AG04449 (cell line): ENCODE measurements at regions of chr1 and their contacts with region 1.

Region 1: GRCh38 chr1:28088168-28088961 is at the start of gene EYA3:
- DNase-seq: peak; percentile 73
- H3K4me3 ChIP-seq: peak within 1 kb of the TSS; percentile 96
- CTCF ChIP-seq: no peak

Region 2: GRCh38 chr1:27884006-27884954 is 204.1 kb before region 1 on chr1:
- CTCF ChIA-PET with region 1: no interaction called
- POLR2A ChIA-PET with region 1: no interaction called
- DNase-seq: no peak
- H3K4me3 ChIP-seq: no peak overlapping the region
- CTCF ChIP-seq: no peak

Region 3: DNA sequence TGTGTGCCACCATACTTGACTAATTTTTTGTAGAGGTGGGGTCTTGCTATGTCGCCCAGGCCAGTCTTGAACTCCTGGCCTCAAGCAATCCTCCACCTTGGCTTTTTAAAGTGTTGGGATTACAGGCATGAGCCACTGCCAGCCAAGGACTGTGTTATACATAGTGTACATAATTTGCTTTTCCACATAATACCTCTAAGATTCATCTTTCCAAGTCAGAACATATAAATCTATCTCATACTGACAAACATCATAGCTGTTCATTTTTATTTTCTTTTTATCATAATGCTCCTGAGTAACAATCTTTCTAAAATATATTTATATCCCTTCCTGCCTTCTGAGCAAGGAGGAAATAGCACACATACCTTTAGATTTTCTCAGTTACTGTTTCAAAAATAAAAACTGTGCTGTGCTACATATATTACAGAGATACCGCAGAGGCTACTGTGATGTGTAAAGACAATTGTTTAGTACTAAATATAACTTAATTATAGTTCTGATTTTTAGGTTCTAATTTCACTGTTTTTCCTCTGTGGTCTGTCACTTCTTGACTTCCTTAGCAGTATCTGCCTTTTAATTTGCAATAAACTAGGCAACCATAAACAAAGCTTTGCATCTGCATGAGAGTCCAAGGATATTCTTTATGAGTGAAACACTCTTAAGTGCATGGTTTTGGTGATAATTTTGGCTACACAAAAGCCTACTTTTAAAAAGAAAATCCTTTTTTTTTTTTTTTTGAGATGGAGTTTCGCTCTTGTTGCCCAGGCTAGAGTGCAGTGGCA is 59.3 kb before region 1 on chr1:
- CTCF ChIA-PET with region 1: interaction called, 11 read pairs
- POLR2A ChIA-PET with region 1: interaction called, 3 read pairs
- DNase-seq: no peak
- H3K4me3 ChIP-seq: no peak overlapping the region
- CTCF ChIP-seq: no peak

Region 4: GRCh38 chr1:28104866-28105467 is 16.6 kb after region 1 on chr1:
- CTCF ChIA-PET with region 1: interaction called, 79 read pairs
- POLR2A ChIA-PET with region 1: no interaction called
- DNase-seq: no peak
- H3K4me3 ChIP-seq: peak overlapping the region; percentile 18
- CTCF ChIP-seq: no peak

Region 5: DNA sequence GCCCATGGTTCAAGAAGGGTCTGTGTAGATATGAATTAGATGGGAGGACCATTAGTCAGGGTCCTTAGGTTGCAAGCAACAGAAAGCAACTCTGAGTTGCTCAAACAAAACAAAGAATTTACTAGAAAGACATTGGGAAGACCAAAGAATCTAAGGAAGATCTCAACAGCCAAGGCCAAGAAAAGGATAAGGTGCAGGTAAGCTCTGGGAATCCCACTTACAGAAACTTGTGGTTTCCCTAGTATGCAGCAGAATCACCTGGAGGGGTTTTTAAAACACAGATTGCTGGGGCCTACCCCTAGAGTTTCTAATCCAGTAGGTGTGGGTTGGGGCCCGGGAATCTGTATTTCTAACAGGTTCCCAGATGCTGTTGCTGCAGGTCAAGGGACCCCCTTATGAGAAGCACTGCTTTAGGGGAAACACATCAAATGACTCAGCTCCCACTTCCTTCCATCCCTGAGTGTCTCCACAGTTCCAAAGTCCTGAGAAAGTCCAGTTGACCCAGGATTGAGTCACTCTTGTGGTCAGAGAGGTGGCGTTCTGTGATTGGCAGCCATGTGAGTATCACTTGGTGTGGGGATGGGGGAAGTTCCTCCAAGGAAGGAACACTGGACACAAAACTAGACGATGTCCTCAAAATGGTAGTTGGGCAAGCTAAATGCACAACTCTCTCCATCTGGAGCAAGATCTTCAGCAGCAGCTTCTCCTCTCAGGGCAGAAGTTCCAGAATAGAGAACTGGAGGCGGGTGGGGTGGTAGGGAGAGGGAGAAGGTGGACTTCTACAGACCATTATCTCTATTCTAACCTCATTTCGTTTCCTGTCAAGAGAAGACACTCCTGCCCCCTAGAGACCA is 24.2 kb after region 1 on chr1:
- CTCF ChIA-PET with region 1: interaction called, 39 read pairs
- POLR2A ChIA-PET with region 1: no interaction called
- DNase-seq: no peak
- H3K4me3 ChIP-seq: no peak overlapping the region
- CTCF ChIP-seq: no peak

Region 6: GRCh38 chr1:28194326-28195035 is 106.1 kb after region 1 on chr1:
- CTCF ChIA-PET with region 1: interaction called, 16 read pairs
- POLR2A ChIA-PET with region 1: no interaction called
- DNase-seq: no peak
- H3K4me3 ChIP-seq: no peak overlapping the region
- CTCF ChIP-seq: no peak

Region 7: DNA sequence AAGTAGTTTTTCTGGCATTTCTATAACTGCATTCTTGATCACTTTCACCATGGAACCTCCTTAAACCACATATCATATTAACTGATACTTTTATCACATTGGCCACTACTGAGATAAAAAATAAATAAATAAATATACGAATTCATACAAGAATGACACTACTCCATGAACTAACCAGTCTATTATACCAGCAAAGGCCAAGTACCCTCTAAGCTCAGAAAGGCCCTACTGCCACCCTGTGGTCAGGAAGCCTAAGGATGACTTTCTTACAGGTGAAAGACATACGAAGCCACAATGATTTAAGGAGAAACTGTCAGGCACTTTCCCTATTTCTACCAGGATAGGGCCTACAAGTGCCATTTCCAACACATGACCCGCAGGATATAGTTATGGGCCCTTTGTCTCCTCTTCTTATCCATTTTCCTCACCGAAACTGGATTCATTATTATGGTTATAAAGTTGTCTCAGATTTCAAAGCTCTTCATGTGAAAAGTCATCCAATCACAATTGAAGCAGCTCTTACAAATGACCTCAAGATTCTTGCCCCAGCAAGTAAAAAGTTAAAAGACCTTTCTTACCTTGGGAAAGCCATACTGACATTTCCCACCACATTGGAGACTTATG is 120.6 kb after region 1 on chr1:
- CTCF ChIA-PET with region 1: interaction called, 330 read pairs
- POLR2A ChIA-PET with region 1: no interaction called
- DNase-seq: no peak
- H3K4me3 ChIP-seq: no peak overlapping the region
- CTCF ChIP-seq: peak; percentile 72